Activated T-helper 1 cell treated with anti-CD3 and anti-CD28 coated beads, Interleukin-12 subunit alpha, Interleukin-12 subunit beta, Interleukin-2, Interleukin-4 antibody, amounts not matched to agents 30 ng/mL and 10 ng/mL and 1 ng/mL, durations not matched to agents 14 hours and 24 hours and 36 hours (primary cell): ENCODE measurements at regions of chr17 and their contacts with region 1.

Region 1: GRCh38 chr17:4229627-4230541 is 33.9 kb downstream of the ANKFY1 start:
- DNase-seq: no peak
- H3K4me3 Mint-ChIP-seq: no peak overlapping the region
- H3K27ac Mint-ChIP-seq: no peak overlapping the region
- H3K4me1 Mint-ChIP-seq: peaks cover 24% of the 10 kb centered on the region
- H3K27me3 Mint-ChIP-seq: no peaks in the 10 kb centered on the region

Region 2: GRCh38 chr17:4678427-4679026 is 448.6 kb after region 1 on chr17:
- intact Hi-C with region 1: loop called (anchors 2 kb)
- DNase-seq: no peak
- H3K4me3 Mint-ChIP-seq: no peak overlapping the region
- H3K27ac Mint-ChIP-seq: no peak overlapping the region
- H3K4me1 Mint-ChIP-seq: peaks cover 16% of the 10 kb centered on the region
- H3K27me3 Mint-ChIP-seq: no peaks in the 10 kb centered on the region